Activated B cell treated with CpG ODN at 0.5 μM for 24 hours (primary cell): ENCODE measurements at regions of chr14 and their contacts with region 1.

Region 1: DNA sequence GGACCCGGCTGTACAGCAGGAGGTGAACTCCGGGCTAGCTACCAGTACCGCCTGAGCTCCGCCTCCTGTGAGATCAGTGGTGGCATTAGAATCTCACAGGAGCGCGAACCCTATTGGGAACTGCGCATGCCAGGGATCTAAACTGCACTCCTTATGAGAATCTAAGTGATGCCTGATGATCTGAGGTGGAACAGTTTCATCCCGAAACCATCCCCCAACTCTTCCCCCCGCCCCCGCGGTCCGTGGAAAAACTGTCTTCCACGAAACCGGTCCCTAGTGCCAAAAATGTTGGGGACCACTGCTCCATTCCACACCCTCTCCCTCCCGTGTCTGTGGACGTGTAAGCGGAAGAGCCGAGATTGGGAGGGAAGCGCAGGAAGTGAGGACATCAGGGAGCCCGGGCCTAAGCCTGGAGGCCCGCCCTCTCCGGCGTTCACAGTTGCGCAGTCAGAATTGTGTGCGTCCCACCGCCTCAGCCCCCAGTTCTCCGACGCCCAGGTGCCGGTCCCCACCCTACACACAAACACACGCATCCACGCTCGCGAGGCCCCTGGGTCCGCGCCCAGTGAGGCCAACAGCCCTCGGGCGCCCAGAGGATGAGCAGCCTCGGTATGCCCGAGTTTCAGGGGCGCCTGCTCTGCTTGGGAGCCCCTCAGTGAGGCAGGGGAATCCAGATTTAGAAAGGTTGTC is 1.8 kb upstream of the RNASE4 start:
- DNase-seq: peak; percentile 70
- ATAC-seq: peak; percentile 59
- H3K4me3 Mint-ChIP-seq: no peak overlapping the region
- H3K27ac Mint-ChIP-seq: no peak overlapping the region
- H3K4me1 Mint-ChIP-seq: peaks cover 16% of the 10 kb centered on the region
- H3K27me3 Mint-ChIP-seq: no peaks in the 10 kb centered on the region
- CTCF ChIP-seq: no peak

Region 2: GRCh38 chr14:20327005-20327869 is 355.3 kb before region 1 on chr14:
- CTCF ChIA-PET with region 1: interaction called, 4 read pairs
- POLR2A ChIA-PET with region 1: no interaction called
- intact Hi-C with region 1: loop called (anchors 2 kb)
- DNase-seq: no peak
- ATAC-seq: peak; percentile 49
- H3K4me3 Mint-ChIP-seq: no peak overlapping the region
- H3K27ac Mint-ChIP-seq: peak overlapping the region; percentile 42
- H3K4me1 Mint-ChIP-seq: peaks cover 26% of the 10 kb centered on the region
- H3K27me3 Mint-ChIP-seq: no peaks in the 10 kb centered on the region
- CTCF ChIP-seq: no peak

Region 3: GRCh38 chr14:20454516-20455354 is 227.8 kb before region 1 on chr14 and contains the starts of genes APEX1 and OSGEP:
- CTCF ChIA-PET with region 1: no interaction called
- POLR2A ChIA-PET with region 1: interaction called, 37 read pairs
- intact Hi-C with region 1: no loop called
- DNase-seq: peak; percentile 88
- ATAC-seq: peak; percentile 88
- H3K4me3 Mint-ChIP-seq: peak within 1 kb of the TSS; percentile 56
- H3K27ac Mint-ChIP-seq: no peak within 1 kb of the TSS
- H3K4me1 Mint-ChIP-seq: peaks cover 35% of the 10 kb centered on the region
- H3K27me3 Mint-ChIP-seq: no peaks in the 10 kb centered on the region
- CTCF ChIP-seq: no peak
- total RNA-seq, gene APEX1: 215 and 231 TPM in 2 replicates
- total RNA-seq, gene OSGEP: 98.3 and 112 TPM in 2 replicates

Region 4: DNA sequence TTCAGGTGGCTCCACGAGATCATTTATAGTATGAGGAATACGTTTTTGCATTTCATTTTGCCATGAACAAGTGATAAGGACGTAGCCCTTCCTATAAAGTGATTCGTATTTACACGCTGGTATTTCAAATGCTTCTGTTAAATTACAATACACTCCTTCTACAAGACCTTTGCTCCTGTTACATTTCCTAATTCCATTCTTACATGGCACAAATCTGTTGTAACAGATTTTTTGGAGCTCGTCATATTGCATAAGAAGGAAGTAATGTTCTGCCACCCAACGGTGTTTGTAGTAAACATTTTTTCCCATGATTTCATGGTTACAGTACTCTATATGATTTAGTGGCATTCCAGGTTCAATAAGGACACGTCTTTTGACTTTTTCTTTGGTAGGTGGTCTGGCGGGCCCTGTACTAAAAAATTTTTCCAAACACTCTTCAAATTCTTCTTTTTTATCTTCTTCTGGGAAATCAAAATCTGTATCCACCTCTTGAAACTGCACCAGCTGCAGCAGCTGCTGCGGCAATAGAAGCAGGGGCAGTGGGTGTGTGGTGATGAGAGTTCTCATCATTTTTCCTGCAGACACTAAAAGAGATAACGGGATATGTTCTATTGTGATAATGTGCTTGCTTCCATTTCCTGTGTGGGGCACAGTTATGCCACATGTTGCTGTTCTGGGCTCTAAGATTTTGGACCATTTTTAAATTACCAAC is 125.9 kb before region 1 on chr14:
- CTCF ChIA-PET with region 1: no interaction called
- POLR2A ChIA-PET with region 1: no interaction called
- intact Hi-C with region 1: no loop called
- DNase-seq: no peak
- ATAC-seq: no peak
- H3K4me3 Mint-ChIP-seq: no peak overlapping the region
- H3K27ac Mint-ChIP-seq: no peak overlapping the region
- H3K4me1 Mint-ChIP-seq: no peaks in the 10 kb centered on the region
- H3K27me3 Mint-ChIP-seq: peaks cover 8% of the 10 kb centered on the region
- CTCF ChIP-seq: no peak

Region 5: DNA sequence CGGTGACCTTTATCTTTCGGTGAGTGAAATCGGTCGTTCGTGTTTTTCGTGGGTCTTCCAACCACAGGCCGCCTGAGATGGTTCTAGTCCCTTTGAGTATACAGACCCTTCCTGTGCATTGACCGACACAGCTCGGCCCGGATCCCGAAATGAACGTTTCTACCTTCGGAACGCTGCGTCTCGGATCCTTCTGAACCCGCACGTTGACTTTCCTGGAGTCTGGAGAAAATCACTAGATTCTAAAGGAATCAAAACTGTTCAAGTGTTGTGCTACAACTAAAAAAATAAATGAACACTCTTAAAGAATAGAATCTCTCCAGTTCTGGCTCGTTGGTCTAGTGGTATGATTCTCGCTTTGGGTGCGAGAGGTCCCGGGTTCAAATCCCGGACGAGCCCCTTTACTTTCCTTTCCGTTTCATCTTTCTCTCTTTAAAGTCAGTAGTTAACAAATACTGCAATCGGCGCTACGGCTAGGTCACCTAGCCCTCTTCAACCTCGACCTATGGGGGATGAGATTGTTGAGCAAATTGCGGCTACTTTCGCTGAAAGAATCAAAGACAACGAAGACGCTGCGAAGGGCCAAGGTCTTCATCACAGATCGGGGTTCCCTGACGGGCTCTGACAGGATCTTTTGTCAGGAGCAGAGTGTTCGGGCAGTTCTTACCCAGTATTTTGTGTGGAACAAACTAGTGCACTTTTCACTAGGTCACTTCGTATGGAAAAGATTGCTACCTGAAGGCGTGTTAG is 49.7 kb before region 1 on chr14:
- CTCF ChIA-PET with region 1: interaction called, 3 read pairs
- POLR2A ChIA-PET with region 1: interaction called, 18 read pairs
- intact Hi-C with region 1: loop called (anchors 1 kb)
- DNase-seq: no peak
- ATAC-seq: peak; percentile 72
- H3K4me3 Mint-ChIP-seq: peak overlapping the region; percentile 82
- H3K27ac Mint-ChIP-seq: peak overlapping the region; percentile 89
- H3K4me1 Mint-ChIP-seq: peaks cover 50% of the 10 kb centered on the region
- H3K27me3 Mint-ChIP-seq: peaks cover 30% of the 10 kb centered on the region
- CTCF ChIP-seq: no peak

Region 6: GRCh38 chr14:20782280-20782890 is 99.8 kb after region 1 on chr14:
- CTCF ChIA-PET with region 1: no interaction called
- POLR2A ChIA-PET with region 1: interaction called, 46 read pairs
- intact Hi-C with region 1: loop called (anchors 1 kb)
- DNase-seq: no peak
- ATAC-seq: peak; percentile 59
- H3K4me3 Mint-ChIP-seq: peak overlapping the region; percentile 86
- H3K27ac Mint-ChIP-seq: peak overlapping the region; percentile 98
- H3K4me1 Mint-ChIP-seq: peaks cover 68% of the 10 kb centered on the region
- H3K27me3 Mint-ChIP-seq: no peaks in the 10 kb centered on the region
- CTCF ChIP-seq: no peak

Region 7: DNA sequence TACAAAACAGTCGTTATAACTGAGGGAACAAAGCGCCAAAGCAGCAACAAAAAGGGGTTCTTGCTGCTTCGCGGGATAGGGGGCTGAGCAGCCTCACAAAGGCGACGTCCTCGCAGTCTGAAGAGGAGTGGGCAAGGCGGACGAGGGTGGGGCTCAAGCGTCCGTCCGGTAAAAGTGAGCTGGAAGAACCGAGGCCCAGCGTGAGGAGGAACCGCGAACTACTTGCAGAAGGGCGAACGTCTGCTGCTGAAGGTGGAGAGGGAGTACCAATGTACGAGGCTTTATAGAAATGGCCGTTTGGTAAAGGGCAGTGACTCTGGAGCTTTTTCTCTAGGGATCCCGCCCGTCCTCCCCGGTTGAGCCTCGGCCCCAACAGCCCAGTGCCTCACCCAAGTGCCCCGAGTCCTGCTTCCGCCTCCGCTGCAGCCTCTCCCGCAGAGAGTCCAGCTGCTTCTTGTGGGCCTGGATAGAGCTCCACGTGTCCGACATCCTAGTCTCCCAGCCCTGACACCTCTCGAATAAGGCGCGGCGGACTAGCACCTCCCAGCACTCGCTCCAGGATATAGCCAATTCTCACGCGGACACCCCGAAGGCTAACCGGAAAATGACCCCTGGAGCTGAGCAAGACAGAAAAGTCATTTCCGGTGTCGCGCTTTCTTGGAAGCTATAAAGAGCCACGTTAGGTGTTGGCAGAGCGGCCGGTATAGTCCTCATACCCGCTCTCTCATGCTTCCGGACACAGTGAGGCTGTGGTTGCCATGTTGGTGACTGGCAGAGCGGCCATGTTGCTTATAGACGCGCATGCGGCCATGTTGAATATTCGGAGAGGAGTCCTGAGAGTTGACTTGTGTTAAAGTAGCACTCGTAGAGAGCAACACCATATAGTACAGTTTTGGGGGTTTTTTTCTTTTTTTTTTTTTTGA is 828.4 kb after region 1 on chr14 and contains the start of gene METTL3:
- CTCF ChIA-PET with region 1: no interaction called
- POLR2A ChIA-PET with region 1: no interaction called
- intact Hi-C with region 1: loop called (anchors 5 kb)
- DNase-seq: peak; percentile 80
- ATAC-seq: peak; percentile 99
- H3K4me3 Mint-ChIP-seq: peak within 1 kb of the TSS; percentile 99
- H3K27ac Mint-ChIP-seq: peak within 1 kb of the TSS; percentile 96
- H3K4me1 Mint-ChIP-seq: peaks cover 29% of the 10 kb centered on the region
- H3K27me3 Mint-ChIP-seq: peaks cover 3% of the 10 kb centered on the region
- CTCF ChIP-seq: no peak
- total RNA-seq, gene METTL3: 81.9 and 94.5 TPM in 2 replicates